Sciatic nerve (tissue), 2 donors: ENCODE measurements at regions of chr15 and their contacts with region 1.

Region 1: GRCh38 chr15:80168421-80168820 is 15.6 kb downstream of the FAH start:
- DNase-seq: no peak
- ATAC-seq: no peak

Region 2: DNA sequence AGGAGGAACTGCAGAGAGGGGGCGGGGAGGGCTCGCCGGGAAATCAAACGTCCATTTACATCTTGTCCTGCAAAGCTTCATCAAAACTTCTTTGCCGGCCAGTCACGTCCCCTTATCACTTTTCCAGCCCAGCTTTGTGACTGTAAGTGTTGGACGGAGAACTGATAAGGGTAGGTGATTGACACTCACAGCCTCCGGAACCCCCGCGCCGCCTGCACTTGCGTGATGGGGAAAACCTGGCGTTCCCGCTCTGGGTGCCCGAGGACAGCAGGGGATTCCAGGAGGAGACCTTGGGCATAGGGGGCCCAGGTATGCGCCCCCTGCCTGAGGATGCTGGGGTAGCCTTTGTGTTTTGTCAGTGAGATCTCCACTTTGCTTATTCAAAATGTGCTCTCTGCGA is 958.7 kb before region 1 on chr15:
- intact Hi-C with region 1: loop called (anchors 5 kb)
- DNase-seq: no peak
- ATAC-seq: no peak

Region 3: DNA sequence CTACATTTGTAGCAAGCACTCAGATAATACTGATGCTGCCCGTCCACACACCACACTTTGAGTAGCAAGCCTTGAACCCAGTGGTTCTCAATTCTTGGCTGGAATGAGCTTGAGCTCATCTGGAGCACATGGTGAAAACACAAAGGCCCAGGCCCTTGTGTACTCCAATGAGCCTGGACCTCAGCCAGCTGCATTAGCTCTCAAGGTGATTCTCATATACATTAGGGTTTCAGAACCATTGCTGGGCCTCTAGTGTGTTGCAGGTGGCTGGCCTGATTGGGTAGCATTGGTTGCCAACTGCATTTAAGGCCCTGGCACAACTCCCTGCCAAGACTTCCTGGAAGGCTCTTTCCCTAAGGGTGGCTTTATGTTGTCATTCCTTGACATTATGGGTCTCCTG is 132.3 kb before region 1 on chr15:
- intact Hi-C with region 1: no loop called
- DNase-seq: no peak
- ATAC-seq: no peak